Dendritic cell treated with granulocyte-macrophage colony-stimulating factor and Interleukin-4, amounts not matched to agents 40 ng/mL and 50 ng/mL, for 4 days (primary cell): ENCODE measurements at regions of chr9 and their contacts with region 1.

Region 1: DNA sequence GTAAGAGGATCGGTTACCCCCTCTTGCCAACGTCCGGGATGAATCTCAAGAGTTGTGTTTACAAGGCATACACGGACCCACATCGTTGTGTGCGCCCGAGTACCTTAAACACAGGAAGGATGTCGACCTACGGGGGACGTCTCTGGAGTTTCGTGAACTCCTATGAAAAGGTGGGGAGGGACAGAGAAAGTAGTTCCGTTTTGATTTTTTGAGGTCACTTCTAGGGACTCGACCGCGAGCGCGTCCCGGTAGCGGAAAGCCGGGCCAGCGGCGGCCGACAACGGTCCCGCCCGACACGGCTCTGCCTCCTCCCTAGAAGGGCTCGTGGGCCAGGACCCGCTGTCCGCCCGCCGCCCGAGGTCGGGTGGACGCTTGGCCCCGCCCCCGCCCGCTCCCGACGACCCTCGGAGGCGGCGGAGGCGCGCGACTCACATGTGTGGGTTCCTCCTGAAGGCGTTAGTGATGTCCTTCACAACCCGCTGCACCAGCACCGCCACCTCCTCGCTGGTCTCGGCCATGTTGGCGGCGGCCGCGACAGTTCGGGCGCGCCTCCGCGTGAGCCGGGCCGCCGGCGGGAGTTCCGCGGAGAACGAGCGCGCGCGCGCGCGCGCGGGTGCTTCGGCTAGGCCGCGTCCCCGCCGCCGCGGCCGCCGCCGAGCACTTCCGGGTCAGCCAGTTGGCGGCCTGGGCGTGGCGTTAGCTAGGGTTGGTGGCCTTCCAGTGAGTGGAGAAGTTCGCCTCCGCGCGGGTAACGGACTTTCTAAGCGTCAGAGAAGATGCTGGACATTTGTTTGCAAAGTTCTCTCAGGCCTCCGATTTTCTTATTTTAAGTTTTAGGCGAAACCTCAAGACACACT is at the start of gene PTAR1:
- H3K4me3 Mint-ChIP-seq: peak within 1 kb of the TSS; percentile 84
- H3K27ac Mint-ChIP-seq: peak within 1 kb of the TSS; percentile 91
- H3K4me1 Mint-ChIP-seq: peaks cover 21% of the 10 kb centered on the region
- H3K27me3 Mint-ChIP-seq: no peaks in the 10 kb centered on the region

Region 2: DNA sequence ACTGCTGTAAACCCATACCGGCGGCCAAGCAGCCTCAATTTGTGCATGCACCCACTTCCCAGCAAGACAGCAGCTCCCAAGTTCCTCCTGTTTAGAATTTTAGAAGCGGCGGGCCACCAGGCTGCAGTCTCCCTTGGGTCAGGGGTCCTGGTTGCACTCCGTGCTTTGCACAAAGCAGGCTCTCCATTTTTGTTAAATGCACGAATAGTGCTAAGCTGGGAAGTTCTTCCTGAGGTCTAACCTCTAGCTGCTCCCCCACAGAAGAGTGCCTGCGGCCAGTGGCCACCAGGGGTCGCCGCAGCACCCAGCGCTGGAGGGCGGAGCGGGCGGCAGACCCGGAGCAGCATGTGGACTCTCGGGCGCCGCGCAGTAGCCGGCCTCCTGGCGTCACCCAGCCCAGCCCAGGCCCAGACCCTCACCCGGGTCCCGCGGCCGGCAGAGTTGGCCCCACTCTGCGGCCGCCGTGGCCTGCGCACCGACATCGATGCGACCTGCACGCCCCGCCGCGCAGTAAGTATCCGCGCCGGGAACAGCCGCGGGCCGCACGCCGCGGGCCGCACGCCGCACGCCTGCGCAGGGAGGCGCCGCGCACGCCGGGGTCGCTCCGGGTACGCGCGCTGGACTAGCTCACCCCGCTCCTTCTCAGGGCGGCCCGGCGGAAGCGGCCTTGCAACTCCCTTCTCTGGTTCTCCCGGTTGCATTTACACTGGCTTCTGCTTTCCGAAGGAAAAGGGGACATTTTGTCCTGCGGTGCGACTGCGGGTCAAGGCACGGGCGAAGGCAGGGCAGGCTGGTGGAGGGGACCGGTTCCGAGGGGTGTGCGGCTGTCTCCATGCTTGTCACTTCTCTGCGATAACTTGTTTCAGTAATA is 724.0 kb before region 1 on chr9 and contains the start of gene FXN:
- intact Hi-C with region 1: loop called (anchors 10 kb)
- H3K4me3 Mint-ChIP-seq: peak within 1 kb of the TSS; percentile 93
- H3K27ac Mint-ChIP-seq: peak within 1 kb of the TSS; percentile 98
- H3K4me1 Mint-ChIP-seq: peaks cover 16% of the 10 kb centered on the region
- H3K27me3 Mint-ChIP-seq: no peaks in the 10 kb centered on the region

Region 3: GRCh38 chr9:69180670-69181069 is 579.0 kb before region 1 on chr9:
- intact Hi-C with region 1: loop called (anchors 10 kb)
- H3K4me3 Mint-ChIP-seq: no peak overlapping the region
- H3K27ac Mint-ChIP-seq: peak overlapping the region; percentile 88
- H3K4me1 Mint-ChIP-seq: peaks cover 39% of the 10 kb centered on the region
- H3K27me3 Mint-ChIP-seq: no peaks in the 10 kb centered on the region

Region 4: DNA sequence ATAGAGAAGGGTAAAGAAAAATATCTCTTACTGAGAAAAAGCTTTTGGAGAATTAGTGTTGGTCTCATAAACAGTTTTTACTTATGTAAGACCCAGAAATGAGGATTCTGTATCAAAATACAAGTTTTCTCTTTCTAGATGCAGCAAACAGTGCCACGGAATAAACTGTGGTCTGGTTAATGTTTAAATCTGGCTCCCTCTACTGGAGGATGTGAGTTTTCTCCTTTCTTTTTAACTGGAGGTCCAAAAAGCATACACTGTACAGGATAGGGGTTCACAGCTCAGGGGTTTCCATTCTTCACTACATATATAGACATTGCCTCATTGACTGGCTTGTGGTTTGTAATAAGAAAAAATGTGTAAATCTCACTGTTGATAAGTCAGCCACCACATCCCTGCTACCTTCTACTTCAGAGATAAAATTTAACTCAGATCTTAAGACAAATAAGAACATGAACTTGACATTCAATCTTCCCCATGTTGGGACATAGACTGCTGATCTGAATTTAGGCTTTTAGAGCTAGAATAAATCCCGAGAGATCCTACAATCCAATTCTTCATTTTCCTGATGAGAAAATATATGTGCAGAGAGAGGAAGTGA is 159.9 kb after region 1 on chr9:
- intact Hi-C with region 1: loop called (anchors 10 kb)
- H3K4me3 Mint-ChIP-seq: no peak overlapping the region
- H3K27ac Mint-ChIP-seq: no peak overlapping the region
- H3K4me1 Mint-ChIP-seq: peaks cover 12% of the 10 kb centered on the region
- H3K27me3 Mint-ChIP-seq: peaks cover 16% of the 10 kb centered on the region

Region 5: DNA sequence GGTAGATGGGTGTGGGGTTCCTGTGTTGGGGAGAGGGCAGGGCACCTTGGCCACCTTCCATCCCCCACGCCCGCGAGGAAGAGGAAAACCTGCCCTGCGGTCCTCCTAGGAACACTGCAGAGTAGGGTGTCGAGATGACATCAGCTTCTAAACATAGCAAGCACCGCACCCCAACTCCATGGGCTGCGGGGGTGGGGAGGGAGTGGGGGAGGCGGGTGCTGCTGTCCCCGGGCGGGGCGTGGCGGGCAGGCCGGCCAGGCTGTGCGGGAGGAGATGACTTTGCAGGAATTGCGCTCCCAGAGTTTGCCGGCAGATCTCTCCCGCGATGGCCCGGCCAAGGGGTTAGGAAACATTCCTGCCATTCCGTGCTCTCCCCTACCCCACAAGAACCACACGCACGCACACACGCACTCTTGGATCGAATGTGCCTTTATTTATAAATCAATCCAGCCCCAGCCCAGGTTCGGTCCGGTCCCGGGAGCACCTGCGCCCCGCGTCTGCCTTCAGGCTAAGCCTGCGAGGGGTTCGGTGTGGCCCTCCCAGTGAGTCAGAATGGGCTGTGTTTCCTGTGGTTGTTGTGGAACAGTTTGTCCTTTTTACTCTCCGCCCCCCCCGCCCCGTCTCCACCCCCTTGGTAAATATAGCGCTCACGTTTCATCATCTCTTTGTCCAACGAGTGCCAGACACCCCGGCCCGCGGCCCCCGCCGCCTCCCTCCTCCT is 660.1 kb after region 1 on chr9:
- intact Hi-C with region 1: loop called (anchors 10 kb)
- H3K4me3 Mint-ChIP-seq: peak overlapping the region; percentile 92
- H3K27ac Mint-ChIP-seq: peak overlapping the region; percentile 96
- H3K4me1 Mint-ChIP-seq: peaks cover 49% of the 10 kb centered on the region
- H3K27me3 Mint-ChIP-seq: no peaks in the 10 kb centered on the region